ENCODE measurements at regions of chr9 and their contacts with region 1.

Region 1: DNA sequence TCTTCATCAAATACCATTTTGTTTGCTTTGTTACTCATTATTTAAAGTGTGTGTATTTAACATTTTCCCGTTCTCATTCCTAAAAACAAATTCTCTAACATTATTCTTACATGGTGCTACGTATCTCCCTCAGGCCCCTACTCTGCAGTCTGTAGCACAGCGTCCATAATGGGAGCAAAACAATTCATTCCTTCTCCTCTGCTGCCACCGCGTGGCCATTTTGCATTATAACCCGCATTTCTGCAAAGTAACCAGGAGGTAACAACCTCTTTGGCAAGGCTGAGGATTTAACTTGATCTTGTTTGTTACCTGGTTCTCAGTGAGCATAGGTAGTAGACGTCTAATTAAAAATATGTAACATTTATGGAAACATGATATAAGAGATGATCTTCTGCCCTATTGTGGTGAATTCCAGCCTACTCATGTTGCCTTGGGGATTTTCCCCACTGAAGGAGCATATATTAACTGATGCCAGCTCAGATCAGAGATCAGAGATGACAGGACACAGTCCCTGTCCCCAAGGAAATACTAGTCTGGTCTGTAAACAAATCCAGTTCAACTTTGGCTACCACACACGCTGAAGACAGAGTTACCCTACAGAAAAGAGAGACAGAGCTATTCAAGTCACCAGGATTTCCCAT is 10.5 kb downstream of the OR1K1 start:
- DNase-seq: peak; percentile 73 to 74
- H3K4me3 ChIP-seq: no peak overlapping the region
- H3K4me3 Mint-ChIP-seq: no peak overlapping the region
- H3K27ac Mint-ChIP-seq: no peak overlapping the region
- H3K4me1 ChIP-seq: peaks cover 9% of the 10 kb centered on the region; the same call in 1 of the 2 replicates
- H3K4me1 Mint-ChIP-seq: no peaks in the 10 kb centered on the region
- H3K27me3 ChIP-seq: no peaks in the 10 kb centered on the region
- H3K27me3 Mint-ChIP-seq: no peaks in the 10 kb centered on the region
- CTCF ChIP-seq: peak; percentile 55 to 83

Region 2: GRCh38 chr9:122092611-122093506 is 717.6 kb before region 1 on chr9 and contains the start of gene TTLL11:
- CTCF ChIA-PET with region 1: no interaction called
- POLR2A ChIA-PET with region 1: no interaction called
- intact Hi-C with region 1: loop called (anchors 10 kb)
- DNase-seq: peak; percentile 95
- H3K4me3 ChIP-seq: peak within 1 kb of the TSS; percentile 87
- H3K4me3 Mint-ChIP-seq: peak within 1 kb of the TSS; percentile 76
- H3K27ac Mint-ChIP-seq: peak within 1 kb of the TSS; percentile 7
- H3K4me1 ChIP-seq: no peaks in the 10 kb centered on the region
- H3K4me1 Mint-ChIP-seq: peaks cover 11% of the 10 kb centered on the region
- H3K27me3 ChIP-seq: no peaks in the 10 kb centered on the region
- H3K27me3 Mint-ChIP-seq: peaks cover 7% of the 10 kb centered on the region
- CTCF ChIP-seq: no peak
- total RNA-seq, gene TTLL11: 4.4 and 4.7 TPM in 2 replicates

Region 3: DNA sequence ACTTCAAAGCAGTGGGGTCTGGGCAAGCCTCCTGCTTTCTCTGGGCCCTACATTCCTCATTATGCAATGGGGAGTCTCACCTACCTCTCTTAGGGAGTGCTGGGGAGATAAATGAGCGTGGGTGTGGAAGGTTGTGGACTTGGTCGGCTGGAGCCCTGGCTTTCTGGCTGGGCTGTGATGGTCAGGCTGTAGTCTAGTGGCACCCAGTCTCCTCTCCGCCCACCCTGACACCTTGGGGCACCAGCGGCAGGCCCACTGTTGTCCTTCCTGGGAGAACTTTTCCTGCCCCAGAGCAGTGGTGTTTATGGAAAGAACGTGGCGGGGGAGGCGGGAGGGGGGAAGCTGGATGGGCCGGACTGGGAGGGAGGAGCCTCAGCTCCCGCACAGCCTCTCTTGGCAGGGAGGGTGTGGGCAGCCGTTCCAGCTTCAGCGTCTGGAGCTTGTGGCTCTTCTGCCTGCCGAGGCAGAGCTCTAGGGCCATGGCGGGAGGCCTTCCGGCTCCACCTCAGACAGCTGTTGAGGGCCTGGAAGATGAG is 435.5 kb before region 1 on chr9:
- CTCF ChIA-PET with region 1: no interaction called
- POLR2A ChIA-PET with region 1: no interaction called
- intact Hi-C with region 1: loop called (anchors 5 kb)
- DNase-seq: no peak
- H3K4me3 ChIP-seq: no peak overlapping the region
- H3K4me3 Mint-ChIP-seq: no peak overlapping the region
- H3K27ac Mint-ChIP-seq: no peak overlapping the region
- H3K4me1 ChIP-seq: no peaks in the 10 kb centered on the region
- H3K4me1 Mint-ChIP-seq: no peaks in the 10 kb centered on the region
- H3K27me3 ChIP-seq: no peaks in the 10 kb centered on the region
- H3K27me3 Mint-ChIP-seq: peaks cover 7% of the 10 kb centered on the region
- CTCF ChIP-seq: no peak

Region 4: DNA sequence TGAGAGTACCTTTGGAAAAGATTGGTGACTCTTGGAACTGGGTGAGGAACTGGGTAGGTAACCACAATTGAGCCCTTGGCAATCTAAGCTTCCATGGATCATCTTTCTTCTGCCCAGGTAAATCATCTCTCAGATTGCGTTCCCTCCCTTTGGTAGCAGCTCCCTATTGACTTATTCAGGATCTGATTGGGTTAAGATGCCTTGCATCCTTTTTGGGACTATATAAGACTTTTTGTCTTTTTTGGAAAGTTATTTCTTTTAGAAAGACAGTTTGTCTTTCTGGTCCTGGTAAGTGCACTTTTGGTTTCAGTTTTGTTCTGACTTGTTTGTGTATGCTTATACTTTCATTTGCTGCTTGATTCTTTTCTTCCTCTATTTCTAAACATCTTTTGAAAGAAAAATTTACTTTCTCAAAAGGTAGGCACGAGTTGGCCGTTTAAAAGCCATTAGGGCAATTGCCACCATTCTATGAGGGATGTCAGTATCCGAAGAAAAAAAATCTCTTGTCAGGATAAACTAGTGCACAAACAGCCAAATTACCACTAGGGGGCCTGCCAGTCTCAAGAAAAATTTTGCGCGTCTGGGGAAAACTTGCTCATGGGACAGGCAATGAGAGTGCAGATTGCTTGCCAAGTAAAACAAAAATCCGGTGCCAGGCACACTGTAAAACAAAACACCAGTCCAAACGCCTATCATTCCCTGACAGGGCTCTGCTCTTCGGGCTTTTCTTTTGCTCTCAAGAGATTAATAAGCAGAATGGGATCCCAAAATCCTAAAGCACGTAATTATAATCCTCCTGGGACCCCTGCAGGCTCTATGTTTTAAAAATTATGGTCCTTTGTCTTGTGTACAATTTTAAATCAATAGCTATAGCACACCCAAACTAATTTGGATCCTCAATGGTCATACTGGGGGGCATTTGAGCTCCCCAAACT is 345.5 kb before region 1 on chr9:
- CTCF ChIA-PET with region 1: interaction called, 7 read pairs
- POLR2A ChIA-PET with region 1: no interaction called
- intact Hi-C with region 1: loop called (anchors 1 kb)
- DNase-seq: peak; percentile 69 to 75
- H3K4me3 ChIP-seq: no peak overlapping the region
- H3K4me3 Mint-ChIP-seq: no peak overlapping the region
- H3K27ac Mint-ChIP-seq: no peak overlapping the region
- H3K4me1 ChIP-seq: no peaks in the 10 kb centered on the region; the same call in 1 of the 2 replicates
- H3K4me1 Mint-ChIP-seq: no peaks in the 10 kb centered on the region
- H3K27me3 ChIP-seq: no peaks in the 10 kb centered on the region
- H3K27me3 Mint-ChIP-seq: peaks cover 8% of the 10 kb centered on the region
- CTCF ChIP-seq: peak; percentile 76 to 80

Region 5: DNA sequence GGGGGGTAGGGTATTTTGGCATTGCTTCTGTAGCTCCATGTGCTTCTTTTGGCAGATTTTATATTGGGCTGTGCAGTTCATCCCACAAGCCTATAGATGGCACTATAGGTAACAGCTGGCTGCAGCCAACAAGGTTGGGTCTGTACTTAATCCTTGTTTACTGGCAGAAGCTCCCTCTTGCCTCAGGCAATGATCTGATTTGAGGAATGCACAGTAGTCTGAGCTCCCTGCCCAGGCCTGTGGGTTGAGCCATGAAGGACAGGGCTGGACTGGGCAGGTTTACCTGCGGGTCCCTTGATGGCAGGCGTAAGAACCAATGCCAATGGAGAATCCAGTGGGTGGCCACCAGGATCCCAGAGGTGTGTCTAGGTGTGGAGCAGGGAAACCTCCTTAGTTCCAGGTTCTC is 311.5 kb before region 1 on chr9:
- CTCF ChIA-PET with region 1: interaction called, 7 read pairs
- POLR2A ChIA-PET with region 1: no interaction called
- intact Hi-C with region 1: loop called (anchors 1 kb)
- DNase-seq: peak; percentile 61 to 82
- H3K4me3 ChIP-seq: no peak overlapping the region
- H3K4me3 Mint-ChIP-seq: no peak overlapping the region
- H3K27ac Mint-ChIP-seq: no peak overlapping the region
- H3K4me1 ChIP-seq: no peaks in the 10 kb centered on the region
- H3K4me1 Mint-ChIP-seq: no peaks in the 10 kb centered on the region
- H3K27me3 ChIP-seq: no peaks in the 10 kb centered on the region
- H3K27me3 Mint-ChIP-seq: peaks cover 4% of the 10 kb centered on the region
- CTCF ChIP-seq: peak; percentile 54 to 66

Region 6: GRCh38 chr9:122619996-122620395 is 190.4 kb before region 1 on chr9:
- CTCF ChIA-PET with region 1: no interaction called
- POLR2A ChIA-PET with region 1: no interaction called
- intact Hi-C with region 1: no loop called
- DNase-seq: no peak
- H3K4me3 ChIP-seq: no peak overlapping the region
- H3K4me3 Mint-ChIP-seq: no peak overlapping the region
- H3K27ac Mint-ChIP-seq: no peak overlapping the region
- H3K4me1 ChIP-seq: no peaks in the 10 kb centered on the region
- H3K4me1 Mint-ChIP-seq: no peaks in the 10 kb centered on the region
- H3K27me3 ChIP-seq: no peaks in the 10 kb centered on the region
- H3K27me3 Mint-ChIP-seq: peaks cover 14% of the 10 kb centered on the region
- CTCF ChIP-seq: no peak